ENCODE measurements at regions of chr2 and their contacts with region 1.

Region 1: GRCh38 chr2:225660262-225661131 is 261.0 kb downstream of the NYAP2 start:
- DNase-seq: peak; percentile 90
- H3K4me3 Mint-ChIP-seq: no peak overlapping the region
- H3K27ac Mint-ChIP-seq: no peak overlapping the region
- H3K4me1 Mint-ChIP-seq: no peaks in the 10 kb centered on the region
- H3K27me3 Mint-ChIP-seq: peaks cover 19% of the 10 kb centered on the region

Region 2: DNA sequence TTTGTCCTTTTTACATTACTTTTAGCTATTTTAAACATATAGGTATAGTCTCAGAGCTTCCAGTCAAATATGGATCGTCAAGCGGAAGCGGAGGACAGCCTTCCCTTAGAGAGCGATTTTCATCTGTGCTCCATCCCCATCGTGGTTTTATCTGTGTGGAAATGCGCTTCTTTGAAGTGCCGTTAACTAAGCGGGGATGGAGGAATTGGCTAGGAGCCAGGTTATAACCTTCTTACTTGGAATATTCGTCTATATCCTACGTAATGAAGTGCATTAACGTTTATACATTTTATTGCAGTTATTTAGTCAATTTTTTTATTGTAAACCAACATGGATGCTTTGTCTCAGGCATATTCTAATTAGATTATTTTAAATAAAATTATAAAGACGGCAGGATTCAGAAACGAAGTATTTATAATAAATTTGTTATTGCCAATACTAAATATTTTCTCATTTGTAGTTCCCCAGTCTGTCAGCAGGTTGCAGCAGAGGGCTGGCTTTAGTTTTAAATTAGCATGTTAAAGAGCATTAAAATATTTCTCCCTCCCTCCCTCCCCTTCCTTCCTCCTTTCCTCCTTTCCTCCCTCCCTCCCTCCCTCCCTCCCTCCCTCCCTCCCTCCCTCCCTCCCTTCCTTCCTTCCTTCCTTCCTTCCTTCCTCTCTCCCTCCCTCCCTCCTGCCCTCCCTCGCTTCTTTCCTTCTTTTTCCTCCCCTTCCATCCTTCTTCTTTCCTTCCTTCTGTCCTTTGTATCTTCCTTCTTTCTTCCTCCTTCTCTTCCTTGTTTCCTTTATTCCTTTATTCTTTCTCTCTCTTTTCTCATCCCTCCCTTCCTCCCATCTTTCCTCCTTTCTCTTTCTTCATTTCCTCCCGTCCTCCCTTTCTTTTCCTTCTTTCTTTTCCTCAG is 537.7 kb before region 1 on chr2:
- intact Hi-C with region 1: loop called (anchors 1 kb)
- DNase-seq: peak; percentile 73
- H3K4me3 Mint-ChIP-seq: no peak overlapping the region
- H3K27ac Mint-ChIP-seq: no peak overlapping the region
- H3K4me1 Mint-ChIP-seq: peaks cover 5% of the 10 kb centered on the region
- H3K27me3 Mint-ChIP-seq: peaks cover 16% of the 10 kb centered on the region

Region 3: GRCh38 chr2:225282858-225283710 is 377.4 kb before region 1 on chr2:
- intact Hi-C with region 1: loop called (anchors 1 kb)
- DNase-seq: peak; percentile 75
- H3K4me3 Mint-ChIP-seq: no peak overlapping the region
- H3K27ac Mint-ChIP-seq: no peak overlapping the region
- H3K4me1 Mint-ChIP-seq: no peaks in the 10 kb centered on the region
- H3K27me3 Mint-ChIP-seq: no peaks in the 10 kb centered on the region

Region 4: GRCh38 chr2:225556461-225556860 is 104.0 kb before region 1 on chr2:
- intact Hi-C with region 1: no loop called
- DNase-seq: no peak
- H3K4me3 Mint-ChIP-seq: no peak overlapping the region
- H3K27ac Mint-ChIP-seq: no peak overlapping the region
- H3K4me1 Mint-ChIP-seq: no peaks in the 10 kb centered on the region
- H3K27me3 Mint-ChIP-seq: peaks cover 6% of the 10 kb centered on the region

Measured in activated CD4-positive, alpha-beta T cell treated with anti-CD3 and anti-CD28 coated beads, Interleukin-2, amount 10 ng/mL, durations not matched to agents 24 days and 14 days (primary cell).